Mammary epithelial cell (primary cell): ENCODE measurements at regions of chr10 and their contacts with region 1.

Region 1: DNA sequence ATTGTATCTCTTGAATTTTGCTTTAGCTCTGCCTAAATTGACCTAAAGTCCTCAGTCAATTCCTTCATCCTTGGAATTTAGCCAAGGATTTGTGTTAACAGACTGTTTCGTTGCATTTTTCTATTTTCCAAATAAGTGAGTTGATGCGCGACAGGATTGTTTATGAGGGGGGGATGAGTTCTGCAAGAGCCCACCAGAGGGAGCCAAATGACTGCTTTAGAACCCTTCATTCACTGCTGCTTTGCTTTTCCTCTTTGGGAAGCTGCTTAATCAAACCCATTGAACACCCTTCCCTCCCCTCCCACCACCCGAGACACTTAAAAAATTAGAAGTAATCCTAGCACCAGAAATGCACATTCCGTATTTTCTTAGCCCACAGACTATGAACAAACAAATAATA is 33.7 kb upstream of the PTF1A start:
- DNase-seq: peak; percentile 31
- H3K4me3 ChIP-seq: peak overlapping the region in 1 of 3 experiments; percentile 13
- H3K27ac ChIP-seq: no peak overlapping the region
- H3K4me1 ChIP-seq: no peaks in the 10 kb centered on the region
- H3K27me3 ChIP-seq: no peaks in the 10 kb centered on the region
- CTCF ChIP-seq: peak; percentile 83 to 89

Region 2: GRCh38 chr10:22765660-22766547 is 392.5 kb before region 1 on chr10:
- CTCF ChIA-PET with region 1: no interaction called
- dilution Hi-C with region 1: no loop called
- in situ Hi-C with region 1: no loop called
- intact Hi-C with region 1: no loop called
- DNase-seq: no peak
- H3K4me3 ChIP-seq: no peak overlapping the region
- H3K27ac ChIP-seq: no peak overlapping the region
- H3K4me1 ChIP-seq: no peaks in the 10 kb centered on the region
- H3K27me3 ChIP-seq: no peaks in the 10 kb centered on the region
- CTCF ChIP-seq: no peak

Region 3: GRCh38 chr10:23293145-23293724 is 134.9 kb after region 1 on chr10:
- CTCF ChIA-PET with region 1: interaction called, 3 read pairs
- dilution Hi-C with region 1: no loop called
- in situ Hi-C with region 1: loop called in 1 of 2 experiments (anchors 5 kb)
- intact Hi-C with region 1: loop called (anchors 1 kb)
- DNase-seq: peak; percentile 20
- H3K4me3 ChIP-seq: no peak overlapping the region
- H3K27ac ChIP-seq: no peak overlapping the region
- H3K4me1 ChIP-seq: no peaks in the 10 kb centered on the region
- H3K27me3 ChIP-seq: no peaks in the 10 kb centered on the region
- CTCF ChIP-seq: peak; percentile 77 to 87

Region 4: GRCh38 chr10:23656735-23657134 is 498.4 kb after region 1 on chr10:
- CTCF ChIA-PET with region 1: no interaction called
- dilution Hi-C with region 1: no loop called
- in situ Hi-C with region 1: no loop called
- intact Hi-C with region 1: loop called (anchors 2 kb)
- DNase-seq: peak; percentile 11
- H3K4me3 ChIP-seq: no peak overlapping the region
- H3K27ac ChIP-seq: no peak overlapping the region
- H3K4me1 ChIP-seq: no peaks in the 10 kb centered on the region
- H3K27me3 ChIP-seq: no peaks in the 10 kb centered on the region
- CTCF ChIP-seq: peak; percentile 59 to 70

Region 5: DNA sequence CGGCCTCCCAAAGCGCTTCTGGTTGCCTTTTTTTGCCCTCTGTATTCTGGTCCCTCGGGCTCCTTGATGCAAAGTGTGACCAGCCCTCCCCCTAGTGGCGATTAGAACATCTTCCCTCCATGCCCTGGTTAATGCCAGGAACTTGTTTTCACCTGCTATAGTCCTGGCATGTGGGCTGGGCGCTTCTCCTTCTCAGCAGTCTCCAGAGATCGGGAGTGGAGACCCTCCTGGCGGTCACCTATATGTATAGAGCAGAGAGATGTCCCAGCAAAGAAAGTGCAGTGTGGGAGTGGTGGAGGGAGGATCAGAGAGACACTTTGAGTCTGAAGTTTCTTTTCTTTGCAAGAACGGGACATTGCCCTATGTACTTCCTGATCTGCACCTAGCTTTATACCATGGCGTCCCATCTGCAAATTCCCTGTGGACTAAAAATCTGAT is 544.6 kb after region 1 on chr10:
- CTCF ChIA-PET with region 1: no interaction called
- dilution Hi-C with region 1: loop called (anchors 10 kb)
- in situ Hi-C with region 1: no loop called
- intact Hi-C with region 1: loop called (anchors 2 kb)
- DNase-seq: peak; percentile 47
- H3K4me3 ChIP-seq: no peak overlapping the region
- H3K27ac ChIP-seq: no peak overlapping the region
- H3K4me1 ChIP-seq: no peaks in the 10 kb centered on the region
- H3K27me3 ChIP-seq: no peaks in the 10 kb centered on the region
- CTCF ChIP-seq: peak; percentile 76 to 84

Region 6: DNA sequence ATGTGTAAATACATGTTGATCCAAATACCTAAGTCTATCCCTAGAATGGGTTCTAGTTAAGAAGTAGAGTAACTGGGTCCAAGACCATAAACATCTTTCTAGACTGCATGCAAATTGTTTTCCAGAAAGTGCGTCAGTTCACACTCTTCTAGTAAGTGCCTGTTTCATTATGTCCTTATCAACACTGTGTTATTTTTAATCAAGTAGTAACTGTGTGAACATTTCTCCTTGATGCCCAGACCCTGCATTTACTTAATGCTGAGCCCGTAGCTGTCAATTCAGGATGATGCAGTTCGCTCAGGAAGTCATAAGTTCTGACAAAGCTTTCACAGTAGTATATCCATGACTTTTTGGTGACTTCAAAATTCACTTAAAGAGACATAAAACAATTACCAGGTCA is 655.3 kb after region 1 on chr10:
- CTCF ChIA-PET with region 1: no interaction called
- dilution Hi-C with region 1: no loop called
- in situ Hi-C with region 1: no loop called
- intact Hi-C with region 1: no loop called
- DNase-seq: no peak
- H3K4me3 ChIP-seq: no peak overlapping the region
- H3K27ac ChIP-seq: no peak overlapping the region
- H3K4me1 ChIP-seq: no peaks in the 10 kb centered on the region
- H3K27me3 ChIP-seq: no peaks in the 10 kb centered on the region
- CTCF ChIP-seq: no peak

Region 7: GRCh38 chr10:24556750-24557742 is 1398.7 kb after region 1 on chr10:
- CTCF ChIA-PET with region 1: interaction called, 3 read pairs
- dilution Hi-C with region 1: no loop called
- in situ Hi-C with region 1: loop called in 1 of 2 experiments (anchors 25 kb)
- intact Hi-C with region 1: loop called (anchors 5 kb)
- DNase-seq: peak; percentile 46
- H3K4me3 ChIP-seq: no peak overlapping the region
- H3K27ac ChIP-seq: no peak overlapping the region
- H3K4me1 ChIP-seq: peaks cover 16% of the 10 kb centered on the region
- H3K27me3 ChIP-seq: no peaks in the 10 kb centered on the region
- CTCF ChIP-seq: peak; percentile 72 to 75